CD4-positive, alpha-beta memory T cell (primary cell): ENCODE measurements at regions of chr3 and their contacts with region 1.

Region 1: GRCh38 chr3:105868742-105869530 is at the start of gene CBLB:
- DNase-seq: peak; percentile 87 to 91 (median 89)
- H3K4me3 ChIP-seq: peak within 1 kb of the TSS; percentile 93
- H3K4me3 Mint-ChIP-seq: peak within 1 kb of the TSS; percentile 95 to 100 (median 99)
- H3K27ac ChIP-seq: peak within 1 kb of the TSS; percentile 84
- H3K27ac Mint-ChIP-seq: peak within 1 kb of the TSS; percentile 87 to 100 (median 99)
- H3K4me1 ChIP-seq: peaks cover 44% of the 10 kb centered on the region
- H3K4me1 Mint-ChIP-seq: peaks cover 35 to 61% (median 47%) of the 10 kb centered on the region in 4 donors
- H3K27me3 ChIP-seq: no peaks in the 10 kb centered on the region
- H3K27me3 Mint-ChIP-seq: no peaks in the 10 kb centered on the region
- total RNA-seq, gene CBLB: 93.5 to 106 TPM

Region 2: DNA sequence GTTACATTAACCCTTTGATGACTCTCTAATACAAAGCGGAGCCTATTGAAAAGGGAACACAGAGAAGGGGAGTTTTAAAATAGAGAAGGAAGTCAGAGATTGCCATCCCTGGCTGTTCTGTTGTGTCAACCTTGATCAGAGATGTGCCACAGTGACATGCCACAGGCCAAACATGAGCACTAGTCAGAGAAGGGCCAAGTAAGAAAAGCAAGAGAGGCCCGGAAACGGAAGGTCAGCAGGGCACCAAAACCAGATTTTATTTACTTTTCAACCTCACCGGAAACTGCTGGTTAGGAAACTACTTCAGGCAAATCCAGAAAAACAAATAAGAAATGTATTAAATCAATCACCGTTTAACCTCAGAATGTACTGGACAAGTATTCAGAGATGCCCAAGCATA is 330.5 kb before region 1 on chr3:
- CTCF ChIA-PET with region 1: no interaction called
- POLR2A ChIA-PET with region 1: no interaction called
- intact Hi-C with region 1: loop called (anchors 10 kb)
- DNase-seq: no peak
- H3K4me3 ChIP-seq: no peak overlapping the region
- H3K4me3 Mint-ChIP-seq: no peak overlapping the region
- H3K27ac ChIP-seq: no peak overlapping the region
- H3K27ac Mint-ChIP-seq: no peak overlapping the region
- H3K4me1 ChIP-seq: no peaks in the 10 kb centered on the region
- H3K4me1 Mint-ChIP-seq: no peaks in the 10 kb centered on the region
- H3K27me3 ChIP-seq: no peaks in the 10 kb centered on the region
- H3K27me3 Mint-ChIP-seq: no peaks in the 10 kb centered on the region

Region 3: DNA sequence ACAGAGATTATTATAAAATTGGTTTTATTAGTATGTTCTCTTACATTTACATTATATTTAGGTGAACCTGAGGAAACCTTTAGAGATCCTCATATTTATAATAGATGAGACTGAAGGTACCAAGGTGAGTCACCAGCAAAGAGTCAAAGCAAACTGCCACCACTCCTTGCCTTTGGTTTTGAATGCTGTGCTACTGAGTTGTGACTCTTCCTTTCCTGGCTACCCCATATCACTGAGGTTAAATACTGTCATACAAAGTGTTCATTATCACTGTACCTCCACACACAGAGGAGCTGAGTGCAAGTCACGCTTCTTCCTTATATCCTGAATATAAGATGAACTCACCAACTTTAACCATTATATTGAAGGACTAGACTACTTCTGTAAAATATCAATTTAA is 168.4 kb before region 1 on chr3:
- CTCF ChIA-PET with region 1: no interaction called
- POLR2A ChIA-PET with region 1: interaction called, 3 read pairs
- intact Hi-C with region 1: loop called (anchors 5 kb)
- DNase-seq: no peak
- H3K4me3 ChIP-seq: no peak overlapping the region
- H3K4me3 Mint-ChIP-seq: no peak overlapping the region
- H3K27ac ChIP-seq: no peak overlapping the region
- H3K27ac Mint-ChIP-seq: peak overlapping the region in 4 of 7 donors; percentile 29 to 61 (median 51)
- H3K4me1 ChIP-seq: peaks cover 19% of the 10 kb centered on the region
- H3K4me1 Mint-ChIP-seq: peaks cover 21 to 46% (median 37%) of the 10 kb centered on the region in 4 donors
- H3K27me3 ChIP-seq: no peaks in the 10 kb centered on the region
- H3K27me3 Mint-ChIP-seq: no peaks in the 10 kb centered on the region

Region 4: GRCh38 chr3:105774444-105775180 is 94.3 kb before region 1 on chr3:
- CTCF ChIA-PET with region 1: no interaction called
- POLR2A ChIA-PET with region 1: no interaction called
- intact Hi-C with region 1: no loop called
- DNase-seq: no peak
- H3K4me3 ChIP-seq: no peak overlapping the region
- H3K4me3 Mint-ChIP-seq: peak overlapping the region in 7 of 8 donors; percentile 7 to 75 (median 21)
- H3K27ac ChIP-seq: no peak overlapping the region
- H3K27ac Mint-ChIP-seq: peak overlapping the region in 4 of 7 donors; percentile 0 to 47 (median 34)
- H3K4me1 ChIP-seq: peaks cover 65% of the 10 kb centered on the region
- H3K4me1 Mint-ChIP-seq: peaks cover 51 to 82% (median 70%) of the 10 kb centered on the region in 4 donors
- H3K27me3 ChIP-seq: no peaks in the 10 kb centered on the region
- H3K27me3 Mint-ChIP-seq: no peaks in the 10 kb centered on the region

Region 5: DNA sequence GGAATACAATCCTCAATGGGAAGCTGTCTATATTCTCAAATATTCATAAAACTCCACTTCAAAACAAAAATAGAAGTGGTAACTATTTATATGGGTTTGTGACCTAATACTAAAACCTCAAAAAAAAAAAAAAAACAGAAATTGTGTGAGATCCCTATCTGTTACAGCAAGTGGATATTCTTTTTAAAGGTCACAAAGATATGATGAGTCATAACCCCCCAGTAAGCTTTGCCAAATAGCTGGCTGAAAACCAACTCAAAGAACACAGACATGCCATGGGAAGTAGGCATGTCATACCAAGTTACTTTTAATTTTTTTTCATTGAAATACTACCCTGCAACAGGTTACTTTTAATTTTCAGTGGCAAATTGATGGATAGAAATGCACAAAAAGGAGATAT is 62.6 kb before region 1 on chr3:
- CTCF ChIA-PET with region 1: no interaction called
- POLR2A ChIA-PET with region 1: interaction called, 5 read pairs
- intact Hi-C with region 1: loop called (anchors 1 kb)
- DNase-seq: peak in 4 of 5 donors; percentile 50 to 79 (median 62)
- H3K4me3 ChIP-seq: no peak overlapping the region
- H3K4me3 Mint-ChIP-seq: peak overlapping the region in 5 of 8 donors; percentile 0 to 48 (median 3)
- H3K27ac ChIP-seq: no peak overlapping the region
- H3K27ac Mint-ChIP-seq: peak overlapping the region; percentile 35 to 89 (median 76)
- H3K4me1 ChIP-seq: peaks cover 59% of the 10 kb centered on the region
- H3K4me1 Mint-ChIP-seq: peaks cover 46 to 72% (median 54%) of the 10 kb centered on the region in 4 donors
- H3K27me3 ChIP-seq: no peaks in the 10 kb centered on the region
- H3K27me3 Mint-ChIP-seq: no peaks in the 10 kb centered on the region

Region 6: GRCh38 chr3:105836533-105836932 is 32.4 kb before region 1 on chr3:
- CTCF ChIA-PET with region 1: interaction called, 6 read pairs
- POLR2A ChIA-PET with region 1: interaction called, 30 read pairs
- intact Hi-C with region 1: loop called (anchors 2 kb)
- DNase-seq: peak in 1 of 5 donors; percentile 43
- H3K4me3 ChIP-seq: peak overlapping the region; percentile 6 to 33
- H3K4me3 Mint-ChIP-seq: peak overlapping the region; percentile 71 to 88 (median 82)
- H3K27ac ChIP-seq: peak overlapping the region; percentile 16
- H3K27ac Mint-ChIP-seq: peak overlapping the region; percentile 22 to 94 (median 89)
- H3K4me1 ChIP-seq: peaks cover 69% of the 10 kb centered on the region
- H3K4me1 Mint-ChIP-seq: peaks cover 55 to 84% (median 69%) of the 10 kb centered on the region in 4 donors
- H3K27me3 ChIP-seq: no peaks in the 10 kb centered on the region
- H3K27me3 Mint-ChIP-seq: no peaks in the 10 kb centered on the region

Region 7: DNA sequence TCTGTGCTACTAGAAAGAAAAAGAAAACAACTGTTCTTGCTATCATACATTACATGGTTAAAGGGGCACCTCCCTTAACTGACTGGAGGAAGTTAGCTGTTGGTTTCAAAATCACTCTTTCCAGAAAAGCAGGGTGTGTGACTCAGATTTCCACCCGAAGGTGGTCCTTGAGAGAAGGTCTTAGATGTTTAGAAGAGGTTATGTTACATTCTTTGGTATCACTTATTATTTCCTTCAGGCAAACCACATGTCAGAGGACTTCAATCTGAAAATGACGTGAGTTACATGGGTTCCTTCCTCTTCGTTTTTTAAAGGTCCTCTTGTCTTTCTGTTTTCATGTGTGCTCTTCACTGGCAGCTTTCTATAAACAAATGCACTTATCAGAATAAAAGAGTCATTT is 307.8 kb after region 1 on chr3:
- CTCF ChIA-PET with region 1: no interaction called
- POLR2A ChIA-PET with region 1: interaction called, 5 read pairs
- intact Hi-C with region 1: loop called (anchors 5 kb)
- DNase-seq: peak; percentile 68 to 82 (median 76)
- H3K4me3 ChIP-seq: peak overlapping the region in 1 of 2 donors; percentile 30
- H3K4me3 Mint-ChIP-seq: peak overlapping the region; percentile 67 to 86 (median 74)
- H3K27ac ChIP-seq: no peak overlapping the region
- H3K27ac Mint-ChIP-seq: peak overlapping the region; percentile 62 to 95 (median 76)
- H3K4me1 ChIP-seq: peaks cover 48% of the 10 kb centered on the region
- H3K4me1 Mint-ChIP-seq: peaks cover 39 to 63% (median 46%) of the 10 kb centered on the region in 4 donors
- H3K27me3 ChIP-seq: no peaks in the 10 kb centered on the region
- H3K27me3 Mint-ChIP-seq: no peaks in the 10 kb centered on the region

Region 8: DNA sequence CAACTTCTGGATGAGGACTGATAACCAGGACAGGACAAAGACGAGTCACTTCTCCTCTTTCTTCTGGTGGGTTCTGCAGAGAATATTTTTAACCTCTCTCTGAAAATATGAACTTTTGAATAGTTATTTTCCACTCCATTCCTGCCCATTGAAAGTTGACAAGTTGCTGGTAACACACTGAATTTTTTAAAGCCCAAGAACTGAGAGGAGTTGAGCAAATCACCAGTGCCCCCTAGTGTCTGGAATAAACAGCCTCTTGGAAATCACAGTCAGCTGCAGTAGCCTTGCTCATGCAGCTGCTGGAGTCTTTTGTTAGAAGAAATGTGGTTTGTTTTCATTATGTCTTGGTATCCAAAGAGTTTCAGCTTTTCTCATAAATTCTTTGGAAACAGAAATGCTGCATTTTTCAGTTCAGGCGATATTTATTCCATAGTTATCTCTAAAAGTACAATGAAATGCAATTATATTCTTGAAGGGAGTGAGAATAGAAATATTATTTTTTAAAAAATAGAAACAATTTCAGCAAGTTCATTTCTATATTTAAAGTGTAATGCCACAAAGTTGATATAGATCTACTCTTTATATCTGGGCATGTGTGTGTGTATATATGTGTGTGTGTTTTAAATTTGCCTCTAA is 740.8 kb after region 1 on chr3:
- CTCF ChIA-PET with region 1: no interaction called
- POLR2A ChIA-PET with region 1: no interaction called
- intact Hi-C with region 1: loop called (anchors 1 kb)
- DNase-seq: peak; percentile 58 to 73 (median 68)
- H3K4me3 ChIP-seq: no peak overlapping the region
- H3K4me3 Mint-ChIP-seq: no peak overlapping the region
- H3K27ac ChIP-seq: no peak overlapping the region
- H3K27ac Mint-ChIP-seq: no peak overlapping the region
- H3K4me1 ChIP-seq: no peaks in the 10 kb centered on the region
- H3K4me1 Mint-ChIP-seq: peaks cover 1 to 6% (median 4%) of the 10 kb centered on the region in 4 donors
- H3K27me3 ChIP-seq: no peaks in the 10 kb centered on the region
- H3K27me3 Mint-ChIP-seq: peaks cover 0 to 1% of the 10 kb centered on the region in 2 donors